ENCODE measurements at regions of chr2 and their contacts with region 1.

Region 1: GRCh38 chr2:179802051-179802882 is 59.1 kb downstream of the ZNF385B start:
- DNase-seq: no peak
- ATAC-seq: no peak

Region 2: GRCh38 chr2:179467111-179467510 is 335.2 kb before region 1 on chr2:
- intact Hi-C with region 1: loop called (anchors 5 kb)
- DNase-seq: no peak
- ATAC-seq: no peak

Measured in sciatic nerve (tissue), 2 donors.